ENCODE measurements at regions of chr12 and their contacts with region 1.

Region 1: DNA sequence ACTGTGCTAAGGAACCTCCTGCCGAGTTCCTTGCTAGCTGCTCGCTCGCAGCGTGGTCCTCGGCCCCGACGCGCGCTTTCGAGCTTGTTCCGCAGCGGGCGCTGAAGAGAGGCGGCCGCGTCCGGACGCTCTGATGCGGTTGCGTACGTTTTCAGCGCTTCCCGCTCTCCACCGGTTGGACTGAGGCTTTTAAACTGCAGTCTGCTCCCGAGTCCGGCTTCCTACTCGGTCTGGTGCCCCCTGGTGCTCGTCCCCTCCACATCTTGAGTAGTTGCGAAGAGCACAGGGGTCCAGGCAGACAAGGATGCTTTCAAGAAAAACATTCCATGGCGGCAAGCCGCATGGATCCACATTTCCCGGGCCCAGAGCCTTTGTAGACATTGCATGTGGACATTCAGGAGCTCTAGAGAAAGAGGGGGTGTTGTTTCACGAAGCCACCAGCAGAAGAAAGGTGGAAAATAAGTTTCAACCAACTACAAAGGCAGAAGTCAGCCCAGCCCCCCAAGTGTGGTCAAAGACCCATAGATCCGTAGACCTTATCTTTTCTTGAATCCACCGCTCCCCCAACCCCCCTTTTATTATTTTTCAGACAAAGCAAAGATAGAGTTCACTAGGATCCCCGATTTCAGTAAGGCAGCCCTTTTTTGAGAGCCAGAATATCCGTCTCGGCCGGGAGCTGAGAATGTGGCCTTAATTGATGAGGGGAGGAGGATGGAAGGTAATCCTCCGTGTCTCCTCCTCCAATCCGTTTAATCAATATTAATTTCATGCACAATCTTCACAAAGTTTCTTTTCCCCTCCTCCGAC is 984 bp upstream of the WNK1 start:
- DNase-seq: peak; percentile 96
- ATAC-seq: peak; percentile 59
- H3K4me3 ChIP-seq: peak overlapping the region; percentile 44
- H3K27ac ChIP-seq: peak overlapping the region; percentile 57
- H3K4me1 ChIP-seq: no peaks in the 10 kb centered on the region; the same call in 1 of the 2 replicates
- H3K27me3 ChIP-seq: no peaks in the 10 kb centered on the region
- CTCF ChIP-seq: peak; percentile 86
- POLR2A ChIP-seq: no peak
- RAD21 ChIP-seq: peak; percentile 81

Region 2: DNA sequence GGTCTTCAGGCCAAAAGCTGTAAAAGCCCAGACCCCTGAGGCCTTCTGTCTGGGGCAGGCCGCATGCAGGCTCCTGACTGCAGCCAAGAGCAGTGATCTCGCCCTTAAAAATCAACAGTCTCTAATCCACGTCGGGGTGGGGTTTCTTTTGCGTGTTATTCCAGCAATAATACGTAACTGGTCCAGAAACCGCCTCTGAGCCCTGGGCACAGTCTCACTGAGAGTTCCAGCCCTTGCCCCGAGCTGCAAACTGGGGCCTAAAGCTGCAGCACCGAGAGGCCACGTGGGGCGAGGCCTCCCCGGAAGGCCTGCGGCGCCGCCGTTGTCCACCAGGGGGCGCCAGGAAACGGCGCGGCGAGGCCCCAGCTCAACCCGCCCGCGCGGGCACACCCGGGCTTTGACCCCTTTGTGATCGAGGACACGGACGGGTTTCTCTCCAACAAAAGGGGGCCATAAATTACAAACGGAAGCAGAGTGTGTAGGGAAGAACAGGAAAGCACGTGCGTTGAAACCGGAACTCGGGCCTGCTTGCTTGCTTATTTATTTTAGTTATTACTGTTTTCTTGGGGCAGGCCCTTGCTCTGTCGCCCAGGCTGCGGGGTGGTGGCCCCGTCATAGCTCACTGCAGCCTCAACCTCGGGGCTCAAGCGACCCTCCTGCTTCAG is 175.3 kb before region 1 on chr12:
- CTCF ChIA-PET with region 1: interaction called, 26 read pairs
- POLR2A ChIA-PET with region 1: interaction called, 4 read pairs
- dilution Hi-C with region 1: no loop called
- in situ Hi-C with region 1: loop called (anchors 5 kb)
- intact Hi-C with region 1: loop called (anchors 1 kb)
- DNase-seq: peak; percentile 31
- ATAC-seq: peak; percentile 86
- H3K4me3 ChIP-seq: no peak overlapping the region; the same call in 1 of the 2 replicates
- H3K27ac ChIP-seq: no peak overlapping the region
- H3K4me1 ChIP-seq: peaks cover 12% of the 10 kb centered on the region
- H3K27me3 ChIP-seq: peaks cover 11% of the 10 kb centered on the region
- CTCF ChIP-seq: peak; percentile 92
- POLR2A ChIP-seq: no peak
- RAD21 ChIP-seq: peak; percentile 88

Region 3: GRCh38 chr12:623172-623864 is 128.1 kb before region 1 on chr12:
- CTCF ChIA-PET with region 1: no interaction called
- POLR2A ChIA-PET with region 1: no interaction called
- dilution Hi-C with region 1: no loop called
- in situ Hi-C with region 1: no loop called
- intact Hi-C with region 1: no loop called
- DNase-seq: no peak
- ATAC-seq: no peak
- H3K4me3 ChIP-seq: no peak overlapping the region
- H3K27ac ChIP-seq: no peak overlapping the region
- H3K4me1 ChIP-seq: no peaks in the 10 kb centered on the region
- H3K27me3 ChIP-seq: peaks cover 27% of the 10 kb centered on the region
- CTCF ChIP-seq: no peak
- POLR2A ChIP-seq: no peak
- RAD21 ChIP-seq: no peak

Region 4: GRCh38 chr12:737122-737739 is 14.2 kb before region 1 on chr12:
- CTCF ChIA-PET with region 1: interaction called, 10 read pairs
- POLR2A ChIA-PET with region 1: no interaction called
- dilution Hi-C with region 1: no loop called
- in situ Hi-C with region 1: no loop called
- intact Hi-C with region 1: no loop called
- DNase-seq: no peak
- ATAC-seq: no peak
- H3K4me3 ChIP-seq: no peak overlapping the region
- H3K27ac ChIP-seq: no peak overlapping the region
- H3K4me1 ChIP-seq: no peaks in the 10 kb centered on the region
- H3K27me3 ChIP-seq: peaks cover 15% of the 10 kb centered on the region
- CTCF ChIP-seq: no peak
- POLR2A ChIP-seq: no peak
- RAD21 ChIP-seq: no peak

Region 5: DNA sequence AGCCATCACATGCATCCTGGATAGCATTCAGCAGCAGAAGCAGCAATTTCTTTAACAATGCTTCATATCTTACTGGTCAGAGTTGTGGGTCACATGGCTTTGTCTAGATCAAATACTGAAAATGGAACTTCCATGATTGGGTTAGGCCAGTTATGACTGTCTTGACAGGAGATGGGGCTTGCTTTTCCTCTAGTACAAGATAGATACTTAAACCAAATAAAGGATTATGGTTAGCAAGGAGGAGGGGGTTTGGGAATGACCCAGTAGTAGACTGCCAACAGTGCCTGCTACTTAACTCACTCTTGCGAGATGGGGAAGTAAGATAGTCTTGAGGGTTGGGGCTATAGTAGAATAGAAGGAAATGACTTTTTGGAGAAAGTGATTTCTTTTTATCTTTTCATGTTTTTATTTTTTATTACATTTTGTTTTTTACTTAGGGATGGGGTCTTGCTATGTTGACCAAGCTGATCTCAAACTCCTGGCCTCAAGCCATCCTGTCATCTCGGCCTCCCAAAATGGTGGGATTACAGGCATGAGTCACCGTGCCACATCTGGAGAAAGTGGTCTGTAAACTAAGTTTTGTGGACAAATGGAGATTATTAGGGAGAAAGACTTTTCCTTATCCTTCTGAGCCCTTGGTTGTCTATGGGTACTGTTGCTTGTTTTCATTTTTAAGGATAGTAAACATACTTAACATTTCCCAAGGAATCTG is 38.6 kb after region 1 on chr12:
- CTCF ChIA-PET with region 1: interaction called, 5 read pairs
- POLR2A ChIA-PET with region 1: no interaction called
- dilution Hi-C with region 1: no loop called
- in situ Hi-C with region 1: no loop called
- intact Hi-C with region 1: loop called (anchors 5 kb)
- DNase-seq: no peak
- ATAC-seq: no peak
- H3K4me3 ChIP-seq: no peak overlapping the region
- H3K27ac ChIP-seq: no peak overlapping the region
- H3K4me1 ChIP-seq: peaks cover 2% of the 10 kb centered on the region
- H3K27me3 ChIP-seq: no peaks in the 10 kb centered on the region
- CTCF ChIP-seq: no peak
- POLR2A ChIP-seq: no peak
- RAD21 ChIP-seq: no peak

Region 6: GRCh38 chr12:949453-950191 is 198.2 kb after region 1 on chr12 and contains the start of gene RAD52:
- CTCF ChIA-PET with region 1: no interaction called
- POLR2A ChIA-PET with region 1: no interaction called
- dilution Hi-C with region 1: no loop called
- in situ Hi-C with region 1: no loop called
- intact Hi-C with region 1: loop called (anchors 2 kb)
- DNase-seq: peak; percentile 99
- ATAC-seq: peak; percentile 89
- H3K4me3 ChIP-seq: peak within 1 kb of the TSS; percentile 72
- H3K27ac ChIP-seq: peak within 1 kb of the TSS; percentile 86
- H3K4me1 ChIP-seq: peaks cover 4% of the 10 kb centered on the region
- H3K27me3 ChIP-seq: no peaks in the 10 kb centered on the region
- CTCF ChIP-seq: peak; percentile 97
- POLR2A ChIP-seq: peak; percentile 78; the same call in 1 of the 2 replicates
- RAD21 ChIP-seq: peak; percentile 83
- total RNA-seq, gene RAD52: 9.7 and 11.3 TPM in 2 replicates